A673 (cell line): ENCODE measurements at regions of chr6 and their contacts with region 1.

Region 1: GRCh38 chr6:136396908-136397307 is 107.3 kb upstream of the BCLAF1 start:
- DNase-seq: no peak
- H3K4me3 ChIP-seq: no peak overlapping the region
- H3K27ac ChIP-seq: no peak overlapping the region
- H3K4me1 ChIP-seq: no peaks in the 10 kb centered on the region
- H3K27me3 ChIP-seq: no peaks in the 10 kb centered on the region
- CTCF ChIP-seq: no peak

Region 2: GRCh38 chr6:136563386-136564152 is 166.7 kb after region 1 on chr6:
- CTCF ChIA-PET with region 1: no interaction called
- POLR2A ChIA-PET with region 1: interaction called, 19 read pairs
- intact Hi-C with region 1: no loop called
- DNase-seq: no peak
- H3K4me3 ChIP-seq: no peak overlapping the region
- H3K27ac ChIP-seq: no peak overlapping the region
- H3K4me1 ChIP-seq: peaks cover 4% of the 10 kb centered on the region
- H3K27me3 ChIP-seq: no peaks in the 10 kb centered on the region
- CTCF ChIP-seq: no peak